ENCODE measurements at regions of chr4 and their contacts with region 1.

Region 1: DNA sequence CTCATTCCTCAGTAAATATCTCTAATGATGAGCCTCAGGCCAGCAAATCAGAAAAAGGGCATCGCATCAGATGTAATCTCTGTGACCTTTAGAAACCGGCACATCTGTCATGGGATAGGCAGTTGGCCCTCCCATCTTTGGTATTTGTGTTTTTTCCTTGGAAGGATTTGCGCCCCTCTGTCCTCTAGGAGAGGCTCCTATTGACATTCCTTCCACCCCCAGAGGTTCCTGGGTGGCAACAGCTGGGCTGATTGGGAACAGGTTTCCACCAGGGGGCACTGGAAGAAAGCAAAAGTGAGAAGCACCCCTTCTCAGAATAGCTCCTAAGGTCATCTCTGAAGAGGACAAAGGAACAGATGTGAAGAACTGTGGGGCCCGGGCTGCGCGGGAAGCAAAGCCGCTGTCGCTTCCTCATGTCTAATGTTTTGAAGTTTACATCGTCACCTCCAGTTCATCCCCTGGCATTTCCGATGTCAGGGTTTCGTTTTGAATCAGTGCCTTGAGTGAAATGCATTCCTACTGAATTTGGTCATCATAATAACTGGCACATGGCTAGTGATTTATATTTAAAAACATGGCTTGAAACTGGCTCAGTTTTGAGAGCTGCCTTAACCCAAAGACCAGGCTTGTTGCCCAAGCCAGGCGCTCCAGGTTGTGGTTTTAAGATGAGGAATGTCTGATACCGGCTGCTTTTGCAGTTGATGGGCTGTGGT is 6.2 kb downstream of the TXK start:
- DNase-seq: peak; percentile 73
- ATAC-seq: peak; percentile 96
- H3K4me3 ChIP-seq: peak overlapping the region; percentile 23 to 51
- H3K27ac ChIP-seq: no peak overlapping the region
- H3K4me1 ChIP-seq: no peaks in the 10 kb centered on the region; the same call in 1 of the 2 replicates
- H3K27me3 ChIP-seq: no peaks in the 10 kb centered on the region
- CTCF ChIP-seq: peak; percentile 73

Region 2: GRCh38 chr4:48290146-48290772 is 162.4 kb after region 1 on chr4:
- CTCF ChIA-PET with region 1: interaction called, 3 read pairs
- POLR2A ChIA-PET with region 1: no interaction called
- in situ Hi-C with region 1: no loop called
- intact Hi-C with region 1: loop called (anchors 5 kb)
- DNase-seq: no peak
- ATAC-seq: peak; percentile 72; the same call in 1 of the 2 replicates
- H3K4me3 ChIP-seq: no peak overlapping the region
- H3K27ac ChIP-seq: no peak overlapping the region
- H3K4me1 ChIP-seq: no peaks in the 10 kb centered on the region
- H3K27me3 ChIP-seq: no peaks in the 10 kb centered on the region; the same call in 1 of the 2 replicates
- CTCF ChIP-seq: peak; percentile 83

Region 3: GRCh38 chr4:48490012-48490679 is 362.3 kb after region 1 on chr4 and contains the start of gene ZAR1:
- CTCF ChIA-PET with region 1: no interaction called
- POLR2A ChIA-PET with region 1: no interaction called
- in situ Hi-C with region 1: no loop called
- intact Hi-C with region 1: loop called (anchors 10 kb)
- DNase-seq: no peak
- ATAC-seq: peak; percentile 76
- H3K4me3 ChIP-seq: peak within 1 kb of the TSS; percentile 35 to 49
- H3K27ac ChIP-seq: no peak within 1 kb of the TSS
- H3K4me1 ChIP-seq: no peaks in the 10 kb centered on the region
- H3K27me3 ChIP-seq: peaks cover 3% of the 10 kb centered on the region; the same call in 1 of the 2 replicates
- CTCF ChIP-seq: no peak
- total RNA-seq, gene ZAR1: not detected

Measured in Panc1 (cell line).